Activated naive CD4-positive, alpha-beta T cell treated with anti-CD3 and anti-CD28 coated beads for 36 hours (primary cell): ENCODE measurements at regions of chr14 and their contacts with region 1.

Region 1: DNA sequence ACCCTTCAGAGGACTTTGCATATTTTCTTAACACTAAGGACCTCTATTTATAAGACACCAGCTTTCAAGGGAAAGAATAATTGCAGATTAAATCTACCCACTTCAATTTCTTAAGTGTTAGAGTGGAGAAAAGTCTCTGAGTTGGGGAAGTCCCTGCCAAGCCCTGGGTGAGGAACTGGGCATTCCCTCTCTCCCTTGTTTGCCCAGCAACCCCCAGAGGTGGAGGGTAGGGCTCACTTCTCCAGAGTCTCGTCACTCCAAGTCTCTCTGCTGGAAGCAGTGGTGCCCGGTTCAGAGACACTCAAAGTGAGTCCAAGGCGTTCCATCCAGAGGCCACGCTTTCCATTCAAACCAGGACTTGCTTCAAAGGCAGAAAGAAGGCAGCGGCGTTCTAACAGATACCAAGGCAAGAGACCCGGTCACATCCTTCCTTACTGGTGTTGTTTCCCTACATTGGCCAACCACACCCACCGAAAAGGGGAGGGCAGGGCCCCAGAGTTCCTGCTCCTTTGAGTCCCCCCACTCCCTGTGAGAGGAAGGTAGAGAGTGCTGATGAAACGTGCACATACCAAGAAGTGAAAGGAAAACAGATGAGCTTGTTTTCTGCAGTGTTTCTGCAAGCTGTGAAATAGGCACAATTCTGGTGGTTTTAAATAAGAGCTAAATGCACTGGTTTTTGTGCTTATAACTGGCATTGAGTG is 6.1 kb upstream of the BDKRB2 start:
- DNase-seq: peak; percentile 64
- H3K4me3 Mint-ChIP-seq: peak overlapping the region; percentile 54
- H3K27ac Mint-ChIP-seq: peak overlapping the region; percentile 47
- H3K4me1 Mint-ChIP-seq: peaks cover 29% of the 10 kb centered on the region
- H3K27me3 Mint-ChIP-seq: peaks cover 8% of the 10 kb centered on the region

Region 2: GRCh38 chr14:96126339-96126782 is 72.2 kb before region 1 on chr14:
- CTCF ChIA-PET with region 1: no interaction called
- intact Hi-C with region 1: loop called (anchors 2 kb)
- DNase-seq: peak; percentile 73
- H3K4me3 Mint-ChIP-seq: peak overlapping the region; percentile 44
- H3K27ac Mint-ChIP-seq: peak overlapping the region; percentile 89
- H3K4me1 Mint-ChIP-seq: peaks cover 41% of the 10 kb centered on the region
- H3K27me3 Mint-ChIP-seq: no peaks in the 10 kb centered on the region

Region 3: GRCh38 chr14:96176811-96177603 is 21.6 kb before region 1 on chr14:
- CTCF ChIA-PET with region 1: no interaction called
- intact Hi-C with region 1: no loop called
- DNase-seq: no peak
- H3K4me3 Mint-ChIP-seq: no peak overlapping the region
- H3K27ac Mint-ChIP-seq: no peak overlapping the region
- H3K4me1 Mint-ChIP-seq: peaks cover 15% of the 10 kb centered on the region
- H3K27me3 Mint-ChIP-seq: no peaks in the 10 kb centered on the region